PC-3 (cell line): ENCODE measurements at regions of chr10 and their contacts with region 1.

Region 1: GRCh38 chr10:50605269-50606263 is 18.2 kb downstream of the SGMS1 start:
- DNase-seq: peak; percentile 99
- ATAC-seq: peak; percentile 73
- H3K4me3 ChIP-seq: peak overlapping the region; percentile 13; the same call in 1 of the 2 replicates
- H3K27ac ChIP-seq: peak overlapping the region; percentile 66
- H3K4me1 ChIP-seq: peaks cover 77% of the 10 kb centered on the region
- H3K27me3 ChIP-seq: no peaks in the 10 kb centered on the region
- CTCF ChIP-seq: no peak

Region 2: DNA sequence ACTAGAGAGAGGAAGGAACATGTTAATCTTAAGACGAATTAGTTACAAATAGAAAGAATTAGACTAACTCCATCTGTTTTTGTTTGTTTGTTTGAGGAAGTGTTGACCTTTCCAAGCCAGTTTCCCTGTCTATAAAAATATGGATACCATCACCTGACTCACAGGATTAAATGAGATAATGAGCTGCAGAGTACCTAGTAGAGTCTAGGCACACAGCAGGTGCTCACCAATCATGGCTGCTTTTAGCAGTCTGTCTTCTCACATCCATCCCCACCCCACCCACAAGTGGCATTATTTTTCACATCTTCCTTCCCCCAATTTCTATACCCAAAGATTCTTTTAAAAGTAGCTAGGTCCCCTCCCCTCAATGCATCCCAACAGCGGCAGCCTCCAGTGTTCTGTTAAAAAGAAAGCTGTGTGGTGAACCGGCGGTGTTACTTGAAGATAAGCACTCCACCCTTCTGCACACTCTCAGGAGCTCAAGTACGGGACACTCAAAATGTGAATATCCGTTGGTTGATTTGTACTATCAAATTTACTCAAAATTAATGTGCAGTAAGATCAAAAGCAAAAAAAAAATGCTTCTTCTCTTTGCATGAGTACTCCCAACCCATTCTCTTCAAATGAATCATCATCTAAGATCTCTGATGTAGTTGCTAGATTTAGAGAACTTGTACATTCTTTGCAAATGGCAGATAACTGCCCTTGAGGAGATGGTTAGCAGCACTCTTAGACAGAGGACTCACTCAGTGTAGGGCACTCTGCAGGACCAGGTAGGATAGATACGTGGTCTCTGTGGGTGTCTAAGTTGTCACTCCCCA is 208.9 kb before region 1 on chr10:
- CTCF ChIA-PET with region 1: interaction called, 11 read pairs
- POLR2A ChIA-PET with region 1: no interaction called
- intact Hi-C with region 1: loop called (anchors 5 kb)
- DNase-seq: peak; percentile 73
- ATAC-seq: 0 out of 2 replicates have a peak, but pooled peaks have one; percentile 6
- H3K4me3 ChIP-seq: no peak overlapping the region
- H3K27ac ChIP-seq: 0 out of 2 replicates have a peak overlapping the region, but pooled peaks have one; percentile 81
- H3K4me1 ChIP-seq: peaks cover 56% of the 10 kb centered on the region
- H3K27me3 ChIP-seq: no peaks in the 10 kb centered on the region
- CTCF ChIP-seq: no peak

Region 3: DNA sequence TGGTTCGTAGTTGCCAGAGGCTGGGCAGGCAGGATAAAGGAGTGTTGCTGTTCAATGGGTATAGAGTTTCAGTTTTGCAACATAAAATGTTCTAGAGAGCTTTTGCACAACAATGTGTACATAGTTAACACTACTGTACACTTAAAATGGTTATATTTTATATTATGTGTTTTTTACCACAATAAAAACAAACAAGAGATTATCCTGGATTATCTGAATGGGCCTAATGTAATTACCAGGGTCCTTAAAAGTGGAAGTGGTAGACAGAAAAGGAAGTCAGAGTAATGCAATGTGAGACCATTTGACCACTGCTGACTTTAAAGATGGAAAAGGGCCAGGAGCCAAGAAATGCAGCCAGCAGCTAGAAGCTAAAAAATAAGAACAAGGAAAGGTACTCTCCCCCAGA is 141.6 kb before region 1 on chr10:
- CTCF ChIA-PET with region 1: no interaction called
- POLR2A ChIA-PET with region 1: no interaction called
- intact Hi-C with region 1: no loop called
- DNase-seq: no peak
- ATAC-seq: no peak; the same call in 1 of the 2 replicates
- H3K4me3 ChIP-seq: no peak overlapping the region
- H3K27ac ChIP-seq: no peak overlapping the region
- H3K4me1 ChIP-seq: peaks cover 7% of the 10 kb centered on the region
- H3K27me3 ChIP-seq: no peaks in the 10 kb centered on the region
- CTCF ChIP-seq: no peak

Region 4: GRCh38 chr10:50561816-50562215 is 43.8 kb before region 1 on chr10:
- CTCF ChIA-PET with region 1: interaction called, 3 read pairs
- POLR2A ChIA-PET with region 1: no interaction called
- intact Hi-C with region 1: loop called (anchors 1 kb)
- DNase-seq: peak; percentile 87
- ATAC-seq: peak; percentile 81
- H3K4me3 ChIP-seq: no peak overlapping the region
- H3K27ac ChIP-seq: no peak overlapping the region
- H3K4me1 ChIP-seq: peaks cover 13% of the 10 kb centered on the region
- H3K27me3 ChIP-seq: no peaks in the 10 kb centered on the region
- CTCF ChIP-seq: peak; percentile 100

Region 5: DNA sequence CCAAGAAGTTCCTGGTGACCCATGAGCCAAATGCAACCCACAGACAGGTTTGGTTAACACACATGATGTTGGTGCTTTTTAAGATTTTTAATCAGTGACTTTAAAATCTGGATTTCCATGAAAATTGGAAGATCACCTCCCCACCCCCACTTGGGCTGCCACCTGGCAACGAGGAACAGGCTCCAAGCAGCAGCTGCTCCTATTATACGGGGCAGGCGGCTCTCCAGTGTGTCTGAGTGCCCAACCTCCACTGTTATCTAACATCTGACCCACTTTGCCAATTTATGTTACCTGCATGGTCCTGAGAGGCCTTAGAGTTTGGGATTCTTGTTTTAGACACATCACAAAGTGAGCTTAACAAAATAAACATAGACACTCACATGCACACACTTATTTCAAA is 38.2 kb before region 1 on chr10:
- CTCF ChIA-PET with region 1: interaction called, 3 read pairs
- POLR2A ChIA-PET with region 1: no interaction called
- intact Hi-C with region 1: loop called (anchors 1 kb)
- DNase-seq: no peak
- ATAC-seq: no peak
- H3K4me3 ChIP-seq: no peak overlapping the region
- H3K27ac ChIP-seq: no peak overlapping the region
- H3K4me1 ChIP-seq: peaks cover 9% of the 10 kb centered on the region; the same call in 1 of the 2 replicates
- H3K27me3 ChIP-seq: no peaks in the 10 kb centered on the region
- CTCF ChIP-seq: no peak